Kidney (tissue), 22 donors: ENCODE measurements at regions of chr11 and their contacts with region 1.

Region 1: DNA sequence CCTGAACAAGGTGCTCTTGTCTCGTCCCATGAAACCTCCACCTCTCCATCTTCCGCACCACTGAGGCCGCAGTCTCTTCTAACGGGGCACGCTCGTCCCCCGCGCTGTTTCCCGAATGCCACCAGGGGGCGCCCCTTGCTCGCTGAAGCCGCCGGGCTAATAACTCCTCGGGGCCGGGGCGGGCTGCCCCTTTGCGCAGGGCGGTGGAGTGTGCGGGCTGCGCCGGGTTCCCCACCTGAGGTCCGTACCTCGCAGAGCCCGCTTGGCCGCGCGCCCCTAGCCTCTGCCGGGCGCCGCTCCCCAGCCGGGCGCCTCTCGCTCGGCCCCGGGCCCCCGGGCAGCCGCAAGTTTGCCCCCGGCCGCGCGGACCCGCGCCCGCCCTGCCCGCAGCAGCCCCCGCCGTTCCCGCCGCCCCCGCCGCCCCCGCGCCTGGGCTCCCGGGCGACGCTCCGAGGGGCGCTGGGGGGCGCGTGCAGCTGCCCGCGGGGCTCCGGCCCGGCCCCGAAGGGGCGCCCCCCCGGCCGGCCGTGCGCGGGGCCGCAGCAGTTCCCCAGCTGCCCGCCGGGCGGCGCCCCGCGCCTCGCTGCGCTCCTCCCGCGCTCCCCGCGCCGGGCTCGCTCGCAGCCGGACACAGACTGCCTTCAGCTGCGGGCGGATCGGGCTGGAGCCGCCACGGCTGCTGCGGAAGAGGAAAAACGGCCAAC is at the start of gene GRIK4:
- DNase-seq: peak; percentile 84 to 94 (median 92)
- H3K4me3 ChIP-seq: no peak within 1 kb of the TSS
- H3K27ac ChIP-seq: no peak within 1 kb of the TSS
- H3K4me1 ChIP-seq: no peaks in the 10 kb centered on the region
- H3K27me3 ChIP-seq: no peaks in the 10 kb centered on the region
- CTCF ChIP-seq: peak; percentile 90
- total RNA-seq, gene GRIK4: 0.25 TPM

Region 2: GRCh38 chr11:120688163-120688562 is 176.9 kb after region 1 on chr11:
- intact Hi-C with region 1: loop called (anchors 5 kb)
- DNase-seq: no peak
- H3K4me3 ChIP-seq: no peak overlapping the region
- H3K27ac ChIP-seq: no peak overlapping the region
- H3K4me1 ChIP-seq: no peaks in the 10 kb centered on the region
- H3K27me3 ChIP-seq: no peaks in the 10 kb centered on the region
- CTCF ChIP-seq: no peak